Activated CD4-positive, alpha-beta memory T cell treated with anti-CD3 and anti-CD28 coated beads for 36 hours (primary cell): ENCODE measurements at regions of chr6 and their contacts with region 1.

Region 1: GRCh38 chr6:131199568-131200272 is 64.5 kb downstream of the AKAP7 start:
- DNase-seq: peak; percentile 83
- H3K4me3 Mint-ChIP-seq: peak overlapping the region; percentile 72
- H3K27ac Mint-ChIP-seq: peak overlapping the region; percentile 93
- H3K4me1 Mint-ChIP-seq: peaks cover 58% of the 10 kb centered on the region
- H3K27me3 Mint-ChIP-seq: no peaks in the 10 kb centered on the region

Region 2: GRCh38 chr6:130730600-130730999 is 469.1 kb before region 1 on chr6:
- CTCF ChIA-PET with region 1: no interaction called
- POLR2A ChIA-PET with region 1: no interaction called
- intact Hi-C with region 1: no loop called
- DNase-seq: no peak
- H3K4me3 Mint-ChIP-seq: no peak overlapping the region
- H3K27ac Mint-ChIP-seq: no peak overlapping the region
- H3K4me1 Mint-ChIP-seq: no peaks in the 10 kb centered on the region
- H3K27me3 Mint-ChIP-seq: no peaks in the 10 kb centered on the region

Region 3: DNA sequence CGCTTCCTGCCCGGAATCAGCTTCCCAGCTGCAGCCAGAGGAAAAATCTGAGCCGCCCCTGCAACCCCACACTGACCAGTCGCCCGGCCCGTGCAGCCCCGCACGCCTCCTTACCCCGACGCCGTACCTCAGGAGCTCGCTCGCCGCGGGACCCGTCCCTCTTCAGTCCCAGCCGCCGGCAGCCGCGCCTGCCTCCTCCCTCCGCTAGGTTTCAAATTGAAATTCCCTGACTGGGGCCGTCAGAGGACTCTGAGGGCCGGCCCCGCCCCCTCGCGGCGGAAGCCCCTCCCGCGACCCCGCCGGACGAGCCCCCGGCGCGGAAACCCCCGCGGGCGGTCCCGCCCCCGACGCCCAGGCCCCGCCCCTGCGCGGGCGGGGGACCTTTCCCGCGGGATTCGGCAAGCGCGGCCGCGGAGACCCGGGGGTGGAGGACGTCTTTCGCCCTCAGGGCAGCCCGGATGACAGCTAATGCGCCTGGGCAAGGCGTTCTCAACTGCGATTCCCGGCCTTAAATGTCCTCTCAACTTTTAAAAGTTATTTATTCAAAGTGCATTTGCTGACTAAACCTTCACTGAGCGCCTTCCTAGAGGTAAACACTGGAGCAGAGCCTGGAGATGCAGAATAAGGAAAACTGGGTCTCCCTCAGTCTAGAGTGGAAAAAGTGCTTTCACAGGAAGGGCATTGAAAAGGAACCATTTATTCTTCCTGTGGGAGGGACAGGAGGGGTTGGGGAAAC is 136.5 kb before region 1 on chr6 and contains the start of gene EPB41L2:
- CTCF ChIA-PET with region 1: no interaction called
- POLR2A ChIA-PET with region 1: no interaction called
- intact Hi-C with region 1: loop called (anchors 5 kb)
- DNase-seq: peak; percentile 85
- H3K4me3 Mint-ChIP-seq: peak within 1 kb of the TSS; percentile 80
- H3K27ac Mint-ChIP-seq: no peak within 1 kb of the TSS
- H3K4me1 Mint-ChIP-seq: peaks cover 27% of the 10 kb centered on the region
- H3K27me3 Mint-ChIP-seq: no peaks in the 10 kb centered on the region
- total RNA-seq, gene EPB41L2: 30.4 to 37.8 TPM

Region 4: GRCh38 chr6:131159608-131160007 is 40.1 kb before region 1 on chr6:
- CTCF ChIA-PET with region 1: no interaction called
- POLR2A ChIA-PET with region 1: no interaction called
- intact Hi-C with region 1: no loop called
- DNase-seq: no peak
- H3K4me3 Mint-ChIP-seq: no peak overlapping the region
- H3K27ac Mint-ChIP-seq: no peak overlapping the region
- H3K4me1 Mint-ChIP-seq: no peaks in the 10 kb centered on the region
- H3K27me3 Mint-ChIP-seq: no peaks in the 10 kb centered on the region

Region 5: DNA sequence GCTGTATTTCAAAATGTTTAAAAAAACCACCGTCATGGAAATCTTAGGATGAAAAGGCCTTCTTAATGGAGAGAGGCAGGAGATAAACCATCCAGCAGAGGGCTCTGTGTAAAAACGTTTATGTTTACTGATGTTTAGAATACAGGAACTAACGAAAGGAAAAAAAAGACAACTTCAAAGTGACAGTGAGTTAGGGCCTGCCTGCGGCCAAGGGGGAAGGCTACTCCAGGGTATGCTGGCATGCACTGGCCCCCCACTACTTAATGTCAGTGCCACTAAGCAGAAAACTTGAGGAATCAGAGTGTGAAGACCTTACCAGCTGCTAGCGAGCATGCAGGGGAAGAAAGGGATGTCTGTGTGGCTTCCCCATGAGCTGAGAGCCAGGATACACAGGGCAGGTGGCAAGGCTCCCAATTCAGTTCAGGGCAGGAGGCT is 16.7 kb before region 1 on chr6:
- CTCF ChIA-PET with region 1: interaction called, 8 read pairs
- POLR2A ChIA-PET with region 1: no interaction called
- intact Hi-C with region 1: loop called (anchors 2 kb)
- DNase-seq: no peak
- H3K4me3 Mint-ChIP-seq: no peak overlapping the region
- H3K27ac Mint-ChIP-seq: no peak overlapping the region
- H3K4me1 Mint-ChIP-seq: peaks cover 9% of the 10 kb centered on the region
- H3K27me3 Mint-ChIP-seq: no peaks in the 10 kb centered on the region

Region 6: DNA sequence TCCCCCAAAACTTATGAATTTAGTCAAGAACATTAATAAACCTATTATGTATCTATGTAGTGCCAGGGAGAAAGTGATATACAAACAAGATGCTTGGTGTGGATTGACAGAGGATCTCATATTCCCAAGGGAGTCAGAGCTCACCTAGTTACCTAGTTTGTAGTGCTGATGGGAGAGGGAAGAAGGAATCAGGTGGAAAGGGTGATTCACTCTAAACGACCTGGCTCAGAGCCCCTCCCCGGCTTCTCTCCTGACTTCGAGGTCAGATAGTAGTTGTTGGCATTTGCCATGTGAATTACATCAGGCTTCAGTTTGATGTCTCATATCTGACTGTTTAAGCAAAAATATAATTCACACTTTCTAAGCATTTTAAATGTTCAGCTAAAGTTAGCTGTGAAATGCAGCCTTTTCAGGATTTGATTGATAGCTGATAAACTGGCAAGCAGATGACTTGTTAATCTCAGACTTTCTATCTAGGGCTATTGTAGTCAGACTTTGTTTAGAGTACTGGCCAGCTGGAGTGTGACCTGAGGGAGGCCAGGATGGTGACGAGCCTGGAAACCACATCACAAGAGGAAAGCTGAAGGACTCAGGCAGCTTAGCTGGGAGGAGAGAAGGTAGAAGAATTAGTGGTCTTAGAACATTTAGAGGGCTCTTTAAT is 59.2 kb after region 1 on chr6:
- CTCF ChIA-PET with region 1: no interaction called
- POLR2A ChIA-PET with region 1: no interaction called
- intact Hi-C with region 1: no loop called
- DNase-seq: no peak
- H3K4me3 Mint-ChIP-seq: no peak overlapping the region
- H3K27ac Mint-ChIP-seq: no peak overlapping the region
- H3K4me1 Mint-ChIP-seq: peaks cover 18% of the 10 kb centered on the region
- H3K27me3 Mint-ChIP-seq: no peaks in the 10 kb centered on the region

Region 7: GRCh38 chr6:131451321-131452144 is 251.8 kb after region 1 on chr6:
- CTCF ChIA-PET with region 1: interaction called, 5 read pairs
- POLR2A ChIA-PET with region 1: no interaction called
- intact Hi-C with region 1: loop called (anchors 2 kb)
- DNase-seq: peak; percentile 12
- H3K4me3 Mint-ChIP-seq: no peak overlapping the region
- H3K27ac Mint-ChIP-seq: peak overlapping the region; percentile 71
- H3K4me1 Mint-ChIP-seq: peaks cover 26% of the 10 kb centered on the region
- H3K27me3 Mint-ChIP-seq: no peaks in the 10 kb centered on the region

Region 8: DNA sequence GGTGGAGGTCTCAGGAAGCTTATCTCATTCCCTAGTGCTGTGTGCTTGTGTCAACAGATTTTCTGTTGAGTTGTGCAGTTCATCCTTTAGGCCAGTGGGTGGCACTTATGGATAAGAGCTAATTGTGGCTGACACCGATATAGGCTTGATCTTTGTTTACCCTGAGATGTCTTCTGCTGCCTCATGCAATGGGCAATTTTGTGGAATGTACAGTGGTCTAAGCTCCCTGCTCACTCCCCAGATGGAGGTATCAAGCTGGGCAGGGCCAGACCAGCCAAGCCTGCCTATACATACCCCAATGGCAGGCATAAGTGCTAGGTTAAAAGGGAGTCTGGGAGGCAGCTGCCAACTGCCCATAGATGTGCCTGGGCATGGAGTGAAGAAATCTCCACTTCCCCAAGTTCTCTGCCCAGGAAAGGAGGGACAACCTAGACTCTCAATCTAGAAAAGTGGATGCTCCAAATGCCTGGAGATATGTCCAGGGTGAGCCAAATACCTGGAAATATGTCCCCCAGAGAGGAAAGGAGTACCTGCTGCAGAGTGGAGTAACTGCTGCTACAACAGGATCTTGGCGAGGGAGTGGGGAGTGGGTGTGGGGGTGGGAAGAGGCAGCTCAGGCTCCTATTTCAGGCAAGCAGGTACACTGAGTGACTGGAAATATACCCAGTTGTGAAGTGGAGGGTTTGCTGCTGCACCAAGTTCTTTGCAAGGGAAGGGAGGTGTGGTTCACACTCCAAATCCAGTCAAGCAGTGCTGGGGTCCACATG is 320.1 kb after region 1 on chr6:
- CTCF ChIA-PET with region 1: interaction called, 21 read pairs
- POLR2A ChIA-PET with region 1: no interaction called
- intact Hi-C with region 1: loop called (anchors 1 kb)
- DNase-seq: peak; percentile 60
- H3K4me3 Mint-ChIP-seq: no peak overlapping the region
- H3K27ac Mint-ChIP-seq: no peak overlapping the region
- H3K4me1 Mint-ChIP-seq: peaks cover 12% of the 10 kb centered on the region
- H3K27me3 Mint-ChIP-seq: peaks cover 2% of the 10 kb centered on the region

Region 9: DNA sequence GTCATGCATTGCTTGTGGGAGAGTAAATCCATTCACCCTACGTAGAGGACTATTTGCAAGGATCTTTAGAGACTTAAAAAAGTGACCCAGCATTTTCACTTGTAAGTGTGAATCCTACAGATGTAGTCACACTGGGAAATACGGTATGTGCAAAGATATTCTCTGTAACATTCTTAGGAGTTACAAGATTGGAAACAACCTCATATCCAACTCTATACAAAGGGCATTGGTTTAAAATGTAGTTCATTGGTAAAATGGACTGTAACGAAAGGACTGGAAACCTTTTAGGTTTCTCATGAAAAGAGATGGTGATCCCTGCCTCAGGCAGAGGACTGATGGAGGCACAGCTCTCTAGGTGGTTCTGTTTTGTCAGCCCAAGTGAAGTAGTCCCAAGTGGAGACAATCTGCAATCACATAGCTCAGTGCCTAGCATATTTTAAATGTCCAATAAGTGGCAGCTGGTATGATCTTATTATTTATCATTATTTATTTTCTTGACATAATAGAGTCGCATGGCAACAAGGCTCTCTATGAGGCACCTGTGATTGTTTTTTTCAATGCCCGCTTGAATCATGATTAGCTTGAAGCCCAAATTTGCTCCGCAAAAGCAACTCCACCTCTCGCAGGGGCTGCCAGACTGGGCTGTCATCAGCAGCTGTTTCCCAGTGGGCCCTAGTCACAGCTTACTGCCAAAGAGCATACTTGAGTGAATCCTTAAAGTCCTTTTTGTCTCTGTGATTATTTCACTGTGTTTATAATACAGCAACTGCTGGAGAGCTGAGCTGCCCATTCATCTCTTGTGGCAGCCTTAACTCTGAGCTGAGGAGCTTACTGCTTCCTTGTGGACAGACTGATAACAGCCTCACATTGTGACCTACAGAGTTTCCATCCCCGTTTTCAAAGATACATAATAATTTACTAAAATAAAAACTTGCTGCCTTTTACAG is 588.3 kb after region 1 on chr6:
- CTCF ChIA-PET with region 1: no interaction called
- POLR2A ChIA-PET with region 1: no interaction called
- intact Hi-C with region 1: loop called (anchors 10 kb)
- DNase-seq: no peak
- H3K4me3 Mint-ChIP-seq: no peak overlapping the region
- H3K27ac Mint-ChIP-seq: no peak overlapping the region
- H3K4me1 Mint-ChIP-seq: peaks cover 7% of the 10 kb centered on the region
- H3K27me3 Mint-ChIP-seq: peaks cover 2% of the 10 kb centered on the region